MCF 10A (cell line): ENCODE measurements at regions of chr17 and their contacts with region 1.

Region 1: DNA sequence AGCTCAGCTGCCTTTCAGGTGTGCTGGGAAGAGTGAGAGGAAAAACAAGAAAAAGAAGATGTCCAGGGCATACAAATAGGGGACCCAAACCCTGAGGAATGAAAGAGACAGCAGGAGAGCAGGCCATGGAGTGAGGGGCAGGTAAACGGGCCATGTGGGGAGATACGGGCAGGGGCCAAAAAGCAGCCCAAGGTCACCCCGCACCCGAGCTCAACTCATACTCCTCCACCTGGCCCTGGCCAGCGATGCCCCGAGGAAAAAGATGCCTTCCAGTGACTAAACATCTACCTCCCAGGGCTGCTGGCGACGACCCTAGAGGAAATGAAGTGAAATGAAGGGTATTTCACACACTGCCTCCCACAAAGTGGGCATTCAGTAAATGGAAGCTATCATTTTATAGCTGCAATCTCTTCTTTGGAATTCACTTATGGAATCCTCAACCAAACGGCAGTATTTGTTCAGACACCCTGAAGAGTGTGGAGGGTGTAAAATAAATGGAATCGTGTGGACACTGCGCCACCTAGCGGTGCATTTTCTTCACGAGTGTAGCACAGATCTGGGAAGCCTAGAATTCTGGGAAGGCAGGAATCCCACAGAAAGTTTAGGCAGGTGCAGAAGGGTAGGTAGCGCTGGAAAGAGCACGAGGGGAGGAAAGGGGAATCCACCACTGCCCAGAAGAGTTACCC is 14.9 kb downstream of the ELAC2 start:
- DNase-seq: peak; percentile 78
- H3K4me3 Mint-ChIP-seq: no peak overlapping the region
- H3K27ac Mint-ChIP-seq: no peak overlapping the region
- H3K4me1 Mint-ChIP-seq: no peaks in the 10 kb centered on the region
- H3K27me3 Mint-ChIP-seq: no peaks in the 10 kb centered on the region
- CTCF ChIP-seq: peak; percentile 78

Region 2: DNA sequence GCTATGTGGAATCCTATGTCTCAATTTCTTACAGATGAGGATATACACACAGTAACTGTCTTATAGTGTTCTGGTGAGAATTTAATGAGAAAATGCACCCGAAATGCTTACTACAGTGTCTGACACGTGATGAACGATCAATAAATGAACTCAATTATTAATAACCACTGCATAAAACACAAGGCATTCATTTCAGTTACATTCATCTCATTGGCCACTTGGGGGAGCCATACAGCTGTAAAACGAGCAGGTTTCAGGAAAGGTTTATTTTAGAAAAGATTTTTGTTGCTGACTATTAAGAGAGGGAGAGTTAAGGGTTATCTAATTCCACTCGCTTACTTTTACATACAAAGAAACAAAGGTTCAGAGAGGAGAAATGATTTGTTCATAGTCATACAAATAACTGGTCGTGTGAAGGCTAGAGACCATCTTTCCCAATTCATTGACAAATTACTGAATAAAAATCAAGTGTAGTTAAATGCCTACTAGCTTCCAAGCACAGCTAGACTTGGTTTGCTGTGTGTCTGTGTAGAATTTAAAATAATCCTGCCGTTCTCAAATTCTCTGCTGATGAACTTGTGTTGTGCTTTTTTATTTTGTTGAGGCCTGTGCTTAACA is 822.2 kb before region 1 on chr17:
- CTCF ChIA-PET with region 1: interaction called, 10 read pairs
- POLR2A ChIA-PET with region 1: no interaction called
- intact Hi-C with region 1: loop called (anchors 2 kb)
- DNase-seq: peak; percentile 73
- H3K4me3 Mint-ChIP-seq: no peak overlapping the region
- H3K27ac Mint-ChIP-seq: no peak overlapping the region
- H3K4me1 Mint-ChIP-seq: no peaks in the 10 kb centered on the region
- H3K27me3 Mint-ChIP-seq: no peaks in the 10 kb centered on the region
- CTCF ChIP-seq: peak; percentile 72

Region 3: DNA sequence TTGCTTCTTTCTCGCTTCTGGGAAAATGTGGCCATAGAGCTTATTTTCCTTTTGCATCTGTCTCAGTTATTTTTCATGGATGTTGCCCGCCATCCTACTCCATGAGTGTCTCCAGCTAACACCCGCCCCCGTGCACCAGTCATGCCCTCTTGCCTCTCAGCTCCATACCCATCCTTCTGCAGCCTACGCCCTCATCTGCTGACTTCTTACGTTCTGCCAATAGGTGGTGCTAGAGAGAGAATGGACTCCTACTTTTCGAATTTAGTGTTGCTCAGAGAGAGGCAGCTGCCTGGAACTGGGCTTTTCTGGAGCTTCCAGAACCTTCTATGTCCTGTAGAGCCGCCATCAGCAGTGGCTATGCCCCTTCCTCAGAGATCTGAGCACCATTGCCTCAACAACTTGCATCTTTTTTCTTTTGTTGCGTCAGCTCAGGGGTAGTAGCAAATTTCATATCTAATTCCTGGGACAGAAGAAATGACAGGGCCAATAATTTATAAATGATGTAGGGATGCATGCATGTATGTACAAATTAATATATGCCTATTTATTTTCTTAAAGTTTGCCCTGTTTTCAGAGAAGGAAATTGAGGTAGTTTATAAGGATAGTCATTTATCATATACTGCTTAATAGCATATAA is 456.9 kb before region 1 on chr17:
- CTCF ChIA-PET with region 1: interaction called, 37 read pairs
- POLR2A ChIA-PET with region 1: interaction called, 3 read pairs
- intact Hi-C with region 1: loop called (anchors 10 kb)
- DNase-seq: peak; percentile 67
- H3K4me3 Mint-ChIP-seq: no peak overlapping the region
- H3K27ac Mint-ChIP-seq: no peak overlapping the region
- H3K4me1 Mint-ChIP-seq: no peaks in the 10 kb centered on the region
- H3K27me3 Mint-ChIP-seq: peaks cover 33% of the 10 kb centered on the region
- CTCF ChIP-seq: peak; percentile 52

Region 4: GRCh38 chr17:12928741-12929140 is 74.2 kb before region 1 on chr17:
- CTCF ChIA-PET with region 1: interaction called, 57 read pairs
- POLR2A ChIA-PET with region 1: no interaction called
- intact Hi-C with region 1: loop called (anchors 1 kb)
- DNase-seq: peak; percentile 32
- H3K4me3 Mint-ChIP-seq: no peak overlapping the region
- H3K27ac Mint-ChIP-seq: no peak overlapping the region
- H3K4me1 Mint-ChIP-seq: peaks cover 5% of the 10 kb centered on the region
- H3K27me3 Mint-ChIP-seq: peaks cover 35% of the 10 kb centered on the region
- CTCF ChIP-seq: peak; percentile 16

Region 5: GRCh38 chr17:12985431-12986293 is 17.2 kb before region 1 on chr17:
- CTCF ChIA-PET with region 1: interaction called, 13 read pairs
- POLR2A ChIA-PET with region 1: no interaction called
- intact Hi-C with region 1: no loop called
- DNase-seq: no peak
- H3K4me3 Mint-ChIP-seq: no peak overlapping the region
- H3K27ac Mint-ChIP-seq: no peak overlapping the region
- H3K4me1 Mint-ChIP-seq: peaks cover 10% of the 10 kb centered on the region
- H3K27me3 Mint-ChIP-seq: no peaks in the 10 kb centered on the region
- CTCF ChIP-seq: no peak

Region 6: GRCh38 chr17:13017659-13018459 is 14.9 kb after region 1 on chr17 and contains the start of gene ELAC2:
- CTCF ChIA-PET with region 1: interaction called, 61 read pairs
- POLR2A ChIA-PET with region 1: interaction called, 10 read pairs
- intact Hi-C with region 1: no loop called
- DNase-seq: peak; percentile 99
- H3K4me3 Mint-ChIP-seq: peak within 1 kb of the TSS; percentile 89
- H3K27ac Mint-ChIP-seq: peak within 1 kb of the TSS; percentile 91
- H3K4me1 Mint-ChIP-seq: peaks cover 6% of the 10 kb centered on the region
- H3K27me3 Mint-ChIP-seq: no peaks in the 10 kb centered on the region
- CTCF ChIP-seq: peak; percentile 13
- total RNA-seq, gene ELAC2: 67.1 and 67.4 TPM in 2 replicates